MCF 10A (cell line): ENCODE measurements at regions of chr6 and their contacts with region 1.

Region 1: GRCh38 chr6:119349323-119350042 is at the start of gene MAN1A1:
- DNase-seq: peak; percentile 78
- H3K4me3 Mint-ChIP-seq: peak within 1 kb of the TSS; percentile 71
- H3K27ac Mint-ChIP-seq: peak within 1 kb of the TSS; percentile 1
- H3K4me1 Mint-ChIP-seq: peaks cover 7% of the 10 kb centered on the region
- H3K27me3 Mint-ChIP-seq: no peaks in the 10 kb centered on the region
- CTCF ChIP-seq: no peak
- total RNA-seq, gene MAN1A1: 1.3 and 1.6 TPM in 2 replicates

Region 2: GRCh38 chr6:118963003-118963402 is 386.5 kb before region 1 on chr6:
- CTCF ChIA-PET with region 1: no interaction called
- POLR2A ChIA-PET with region 1: no interaction called
- intact Hi-C with region 1: loop called (anchors 5 kb)
- DNase-seq: peak; percentile 12
- H3K4me3 Mint-ChIP-seq: no peak overlapping the region
- H3K27ac Mint-ChIP-seq: no peak overlapping the region
- H3K4me1 Mint-ChIP-seq: no peaks in the 10 kb centered on the region
- H3K27me3 Mint-ChIP-seq: no peaks in the 10 kb centered on the region
- CTCF ChIP-seq: no peak

Region 3: DNA sequence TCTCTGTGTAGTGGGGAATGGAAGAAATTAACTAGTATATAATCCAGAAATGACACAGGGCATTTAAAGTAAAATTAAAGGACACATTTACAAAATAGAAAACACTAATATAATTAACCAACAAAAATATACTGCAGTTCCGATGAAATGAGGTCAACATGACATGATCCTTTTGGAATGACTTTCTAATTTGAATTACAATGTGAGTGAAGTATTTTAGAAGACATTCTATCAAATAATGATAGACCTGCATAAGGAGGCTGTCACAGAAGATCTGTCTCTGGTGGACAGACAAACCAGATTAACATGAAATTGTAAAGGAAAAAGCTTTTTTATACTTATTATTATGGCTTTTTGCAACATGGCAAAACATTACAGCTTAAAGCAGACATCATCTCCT is 170.4 kb before region 1 on chr6:
- CTCF ChIA-PET with region 1: no interaction called
- POLR2A ChIA-PET with region 1: no interaction called
- intact Hi-C with region 1: no loop called
- DNase-seq: no peak
- H3K4me3 Mint-ChIP-seq: no peak overlapping the region
- H3K27ac Mint-ChIP-seq: no peak overlapping the region
- H3K4me1 Mint-ChIP-seq: no peaks in the 10 kb centered on the region
- H3K27me3 Mint-ChIP-seq: no peaks in the 10 kb centered on the region
- CTCF ChIP-seq: no peak

Region 4: GRCh38 chr6:119333707-119334295 is 15.7 kb before region 1 on chr6:
- CTCF ChIA-PET with region 1: interaction called, 24 read pairs
- POLR2A ChIA-PET with region 1: interaction called, 6 read pairs
- intact Hi-C with region 1: no loop called
- DNase-seq: peak; percentile 44
- H3K4me3 Mint-ChIP-seq: no peak overlapping the region
- H3K27ac Mint-ChIP-seq: no peak overlapping the region
- H3K4me1 Mint-ChIP-seq: no peaks in the 10 kb centered on the region
- H3K27me3 Mint-ChIP-seq: no peaks in the 10 kb centered on the region
- CTCF ChIP-seq: peak; percentile 45

Region 5: GRCh38 chr6:119467488-119468081 is 118.1 kb after region 1 on chr6:
- CTCF ChIA-PET with region 1: no interaction called
- POLR2A ChIA-PET with region 1: no interaction called
- intact Hi-C with region 1: no loop called
- DNase-seq: peak; percentile 11
- H3K4me3 Mint-ChIP-seq: peak overlapping the region; percentile 28
- H3K27ac Mint-ChIP-seq: no peak overlapping the region
- H3K4me1 Mint-ChIP-seq: peaks cover 9% of the 10 kb centered on the region
- H3K27me3 Mint-ChIP-seq: no peaks in the 10 kb centered on the region
- CTCF ChIP-seq: no peak

Region 6: GRCh38 chr6:119627908-119628669 is 278.6 kb after region 1 on chr6:
- CTCF ChIA-PET with region 1: interaction called, 13 read pairs
- POLR2A ChIA-PET with region 1: interaction called, 10 read pairs
- intact Hi-C with region 1: loop called (anchors 1 kb)
- DNase-seq: peak; percentile 45
- H3K4me3 Mint-ChIP-seq: peak overlapping the region; percentile 11
- H3K27ac Mint-ChIP-seq: no peak overlapping the region
- H3K4me1 Mint-ChIP-seq: peaks cover 13% of the 10 kb centered on the region
- H3K27me3 Mint-ChIP-seq: no peaks in the 10 kb centered on the region
- CTCF ChIP-seq: no peak

Region 7: DNA sequence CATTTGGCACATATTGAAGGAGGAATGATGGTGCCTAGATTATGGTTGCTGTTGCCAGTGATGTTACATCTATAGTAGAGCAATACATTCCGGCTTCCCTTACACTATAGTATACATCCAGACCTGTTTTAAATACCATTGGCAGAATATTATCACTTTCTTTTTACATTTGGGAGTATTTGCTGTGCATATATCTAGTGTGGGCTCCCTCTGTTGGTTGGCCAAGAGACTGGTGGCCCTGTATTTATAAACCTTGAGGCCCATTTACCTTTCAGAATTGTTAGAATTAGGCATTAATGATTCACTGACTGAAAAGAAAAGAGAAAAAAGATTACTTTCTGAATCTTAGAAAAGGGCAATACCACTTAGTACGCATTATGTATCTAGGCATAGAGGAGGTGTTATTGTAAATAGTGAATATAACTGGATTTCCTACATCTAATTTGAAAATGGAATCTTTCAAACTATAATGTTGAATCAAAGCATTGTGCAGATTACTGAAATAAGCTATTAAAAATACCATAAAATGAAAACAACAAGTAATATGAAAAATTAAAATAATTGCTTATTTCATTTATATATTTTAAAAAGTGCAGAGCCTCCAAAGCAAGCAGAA is 628.9 kb after region 1 on chr6:
- CTCF ChIA-PET with region 1: interaction called, 17 read pairs
- POLR2A ChIA-PET with region 1: no interaction called
- intact Hi-C with region 1: loop called (anchors 1 kb)
- DNase-seq: peak; percentile 33
- H3K4me3 Mint-ChIP-seq: no peak overlapping the region
- H3K27ac Mint-ChIP-seq: no peak overlapping the region
- H3K4me1 Mint-ChIP-seq: no peaks in the 10 kb centered on the region
- H3K27me3 Mint-ChIP-seq: no peaks in the 10 kb centered on the region
- CTCF ChIP-seq: peak; percentile 50

Region 8: GRCh38 chr6:120378582-120379220 is 1029.2 kb after region 1 on chr6:
- CTCF ChIA-PET with region 1: interaction called, 3 read pairs
- POLR2A ChIA-PET with region 1: no interaction called
- intact Hi-C with region 1: loop called (anchors 10 kb)
- DNase-seq: peak; percentile 61
- H3K4me3 Mint-ChIP-seq: no peak overlapping the region
- H3K27ac Mint-ChIP-seq: no peak overlapping the region
- H3K4me1 Mint-ChIP-seq: no peaks in the 10 kb centered on the region
- H3K27me3 Mint-ChIP-seq: peaks cover 1% of the 10 kb centered on the region
- CTCF ChIP-seq: peak; percentile 50